CD4-positive, alpha-beta T cell (primary cell): ENCODE measurements at regions of chr17 and their contacts with region 1.

Region 1: GRCh38 chr17:72725433-72726068 is 366.9 kb downstream of the SLC39A11 start:
- DNase-seq: peak; percentile 14 to 72 (median 40)
- ATAC-seq: peak; percentile 42
- H3K4me3 ChIP-seq: no peak overlapping the region
- H3K4me3 Mint-ChIP-seq: peak overlapping the region; percentile 57
- H3K27ac ChIP-seq: no peak overlapping the region
- H3K27ac Mint-ChIP-seq: peak overlapping the region; percentile 75
- H3K4me1 ChIP-seq: peaks cover 32% of the 10 kb centered on the region
- H3K4me1 Mint-ChIP-seq: peaks cover 31% of the 10 kb centered on the region
- H3K27me3 ChIP-seq: no peaks in the 10 kb centered on the region
- H3K27me3 Mint-ChIP-seq: no peaks in the 10 kb centered on the region
- CTCF ChIP-seq: peak; percentile 90

Region 2: DNA sequence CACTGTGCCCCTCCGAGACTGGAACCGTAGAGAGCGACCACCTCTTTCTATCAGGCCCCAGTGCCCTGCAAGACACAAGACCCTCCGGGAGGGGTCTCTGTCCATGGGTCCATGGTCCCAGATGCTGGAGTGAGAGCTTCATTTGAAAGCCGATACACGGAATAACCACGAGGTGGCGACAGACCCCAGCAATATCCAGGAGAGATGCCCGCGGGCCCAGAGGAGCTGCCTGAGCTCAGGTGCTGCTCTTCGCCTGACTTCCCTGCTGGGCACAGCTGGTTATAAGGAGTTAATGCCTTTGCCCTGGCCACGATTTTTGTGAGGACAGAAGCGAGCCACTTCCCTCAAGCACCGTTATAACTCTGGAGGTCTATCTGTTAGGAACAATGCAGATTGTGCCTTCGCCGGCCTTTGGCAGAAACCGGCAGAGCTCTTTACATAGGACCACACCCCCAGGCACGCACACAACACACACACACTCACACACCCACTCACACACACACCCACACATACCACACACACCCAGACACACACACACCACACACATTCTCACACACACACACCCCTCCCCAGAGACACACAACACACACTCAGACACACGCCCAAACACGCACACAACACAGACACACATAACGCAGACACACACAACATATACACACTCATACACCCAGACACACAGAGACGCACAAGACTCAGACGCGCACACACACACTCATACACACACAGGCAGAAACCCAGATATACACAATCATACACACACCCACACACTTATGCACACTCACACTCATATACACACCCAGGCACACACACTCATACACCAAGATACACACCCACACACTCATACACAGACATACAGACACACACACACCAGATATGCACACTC is 168.4 kb before region 1 on chr17:
- CTCF ChIA-PET with region 1: interaction called, 13 read pairs
- POLR2A ChIA-PET with region 1: interaction called, 6 read pairs
- intact Hi-C with region 1: loop called (anchors 2 kb)
- DNase-seq: peak; percentile 30 to 71 (median 44)
- ATAC-seq: peak; percentile 39
- H3K4me3 ChIP-seq: no peak overlapping the region
- H3K4me3 Mint-ChIP-seq: no peak overlapping the region
- H3K27ac ChIP-seq: no peak overlapping the region
- H3K27ac Mint-ChIP-seq: no peak overlapping the region
- H3K4me1 ChIP-seq: peaks cover 3% of the 10 kb centered on the region
- H3K4me1 Mint-ChIP-seq: no peaks in the 10 kb centered on the region
- H3K27me3 ChIP-seq: no peaks in the 10 kb centered on the region
- H3K27me3 Mint-ChIP-seq: no peaks in the 10 kb centered on the region
- CTCF ChIP-seq: peak; percentile 76

Region 3: GRCh38 chr17:73156166-73156840 is 430.8 kb after region 1 on chr17:
- CTCF ChIA-PET with region 1: interaction called, 13 read pairs
- POLR2A ChIA-PET with region 1: interaction called, 21 read pairs
- intact Hi-C with region 1: loop called (anchors 1 kb)
- DNase-seq: peak in 13 of 14 experiments; percentile 14 to 72 (median 43)
- ATAC-seq: peak; percentile 90
- H3K4me3 ChIP-seq: no peak overlapping the region
- H3K4me3 Mint-ChIP-seq: no peak overlapping the region
- H3K27ac ChIP-seq: no peak overlapping the region
- H3K27ac Mint-ChIP-seq: no peak overlapping the region
- H3K4me1 ChIP-seq: peaks cover 6% of the 10 kb centered on the region
- H3K4me1 Mint-ChIP-seq: peaks cover 15% of the 10 kb centered on the region
- H3K27me3 ChIP-seq: peaks cover 3 to 13% of the 10 kb centered on the region in 2 experiments
- H3K27me3 Mint-ChIP-seq: peaks cover 34% of the 10 kb centered on the region
- CTCF ChIP-seq: peak; percentile 70

Region 4: GRCh38 chr17:73255671-73256181 is 530.2 kb after region 1 on chr17:
- CTCF ChIA-PET with region 1: no interaction called
- POLR2A ChIA-PET with region 1: no interaction called
- intact Hi-C with region 1: loop called in 1 of 2 experiments (anchors 2 kb)
- DNase-seq: peak; percentile 18 to 76 (median 46)
- ATAC-seq: peak; percentile 73
- H3K4me3 ChIP-seq: no peak overlapping the region
- H3K4me3 Mint-ChIP-seq: no peak overlapping the region
- H3K27ac ChIP-seq: no peak overlapping the region
- H3K27ac Mint-ChIP-seq: no peak overlapping the region
- H3K4me1 ChIP-seq: peaks cover 6% of the 10 kb centered on the region
- H3K4me1 Mint-ChIP-seq: no peaks in the 10 kb centered on the region
- H3K27me3 ChIP-seq: no peaks in the 10 kb centered on the region
- H3K27me3 Mint-ChIP-seq: no peaks in the 10 kb centered on the region
- CTCF ChIP-seq: peak; percentile 100

Region 5: GRCh38 chr17:73998653-73999645 is 1273.4 kb after region 1 on chr17:
- CTCF ChIA-PET with region 1: no interaction called
- POLR2A ChIA-PET with region 1: no interaction called
- intact Hi-C with region 1: loop called in 1 of 2 experiments (anchors 5 kb)
- DNase-seq: peak; percentile 53 to 73 (median 62)
- ATAC-seq: peak; percentile 77
- H3K4me3 ChIP-seq: no peak overlapping the region
- H3K4me3 Mint-ChIP-seq: no peak overlapping the region
- H3K27ac ChIP-seq: no peak overlapping the region
- H3K27ac Mint-ChIP-seq: no peak overlapping the region
- H3K4me1 ChIP-seq: no peaks in the 10 kb centered on the region
- H3K4me1 Mint-ChIP-seq: peaks cover 4% of the 10 kb centered on the region
- H3K27me3 ChIP-seq: no peaks in the 10 kb centered on the region
- H3K27me3 Mint-ChIP-seq: peaks cover 17% of the 10 kb centered on the region
- CTCF ChIP-seq: peak; percentile 79

Region 6: DNA sequence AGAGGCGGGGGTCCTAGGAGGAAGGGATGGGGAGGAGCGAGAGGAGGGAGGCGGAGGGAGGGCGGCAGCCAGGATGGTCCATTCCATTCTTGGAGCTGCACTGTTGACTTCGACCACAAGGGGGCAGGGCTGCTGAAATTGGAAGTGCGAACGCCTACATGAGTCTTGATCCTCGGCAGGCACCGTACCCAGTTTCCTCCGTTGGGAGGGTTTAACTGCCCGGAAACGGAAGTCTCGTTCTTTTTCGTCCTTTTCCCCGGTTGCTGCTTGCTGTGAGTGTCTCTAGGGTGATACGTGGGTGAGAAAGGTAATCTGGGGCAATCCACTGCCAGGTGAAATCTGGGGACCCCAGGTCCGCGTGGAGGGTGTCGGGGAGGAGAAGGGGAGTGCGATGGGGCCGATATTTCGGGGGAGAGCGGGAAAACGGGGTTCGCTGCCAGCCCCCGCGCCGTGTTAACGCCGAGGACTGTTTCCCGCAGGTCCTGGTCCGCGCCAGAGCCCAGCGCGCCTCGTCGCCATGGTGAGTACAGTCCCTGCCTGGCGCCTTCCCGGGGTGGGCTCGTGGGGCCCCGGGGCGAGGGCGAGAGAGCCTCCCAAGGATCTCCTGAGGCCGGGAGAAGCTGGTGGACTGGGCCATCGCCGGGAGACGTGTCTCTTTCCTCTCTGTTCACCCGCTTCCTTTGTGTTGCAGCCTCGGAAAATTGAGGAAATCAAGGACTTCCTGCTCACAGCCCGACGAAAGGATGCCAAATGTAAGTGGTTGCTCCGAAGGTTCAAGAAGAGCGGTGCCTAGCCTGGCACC is 1478.1 kb after region 1 on chr17 and contains the start of gene RPL38:
- CTCF ChIA-PET with region 1: no interaction called
- POLR2A ChIA-PET with region 1: interaction called, 3 read pairs
- intact Hi-C with region 1: loop called in 1 of 2 experiments (anchors 10 kb)
- DNase-seq: peak; percentile 88 to 97 (median 95)
- ATAC-seq: peak; percentile 85
- H3K4me3 ChIP-seq: peak within 1 kb of the TSS; percentile 97
- H3K4me3 Mint-ChIP-seq: peak within 1 kb of the TSS; percentile 94
- H3K27ac ChIP-seq: peak within 1 kb of the TSS; percentile 69 to 87
- H3K27ac Mint-ChIP-seq: peak within 1 kb of the TSS; percentile 82
- H3K4me1 ChIP-seq: peaks cover 59% of the 10 kb centered on the region
- H3K4me1 Mint-ChIP-seq: peaks cover 44% of the 10 kb centered on the region
- H3K27me3 ChIP-seq: peaks cover 18 to 24% of the 10 kb centered on the region in 2 experiments
- H3K27me3 Mint-ChIP-seq: peaks cover 16% of the 10 kb centered on the region
- CTCF ChIP-seq: peak; percentile 89
- total RNA-seq, gene RPL38: 2,305 to 2,531 TPM